ENCODE measurements at regions of chr12 and their contacts with region 1.

Region 1: GRCh38 chr12:73665193-73665592 is 872.4 kb upstream of the ATXN7L3B start:
- DNase-seq: no peak
- ATAC-seq: no peak
- H3K4me3 ChIP-seq: no peak overlapping the region
- H3K27ac ChIP-seq: no peak overlapping the region
- H3K4me1 ChIP-seq: no peaks in the 10 kb centered on the region
- H3K27me3 ChIP-seq: no peaks in the 10 kb centered on the region
- CTCF ChIP-seq: no peak
- EP300 ChIP-seq: no peak
- POLR2A ChIP-seq: no peak
- RAD21 ChIP-seq: no peak

Region 2: DNA sequence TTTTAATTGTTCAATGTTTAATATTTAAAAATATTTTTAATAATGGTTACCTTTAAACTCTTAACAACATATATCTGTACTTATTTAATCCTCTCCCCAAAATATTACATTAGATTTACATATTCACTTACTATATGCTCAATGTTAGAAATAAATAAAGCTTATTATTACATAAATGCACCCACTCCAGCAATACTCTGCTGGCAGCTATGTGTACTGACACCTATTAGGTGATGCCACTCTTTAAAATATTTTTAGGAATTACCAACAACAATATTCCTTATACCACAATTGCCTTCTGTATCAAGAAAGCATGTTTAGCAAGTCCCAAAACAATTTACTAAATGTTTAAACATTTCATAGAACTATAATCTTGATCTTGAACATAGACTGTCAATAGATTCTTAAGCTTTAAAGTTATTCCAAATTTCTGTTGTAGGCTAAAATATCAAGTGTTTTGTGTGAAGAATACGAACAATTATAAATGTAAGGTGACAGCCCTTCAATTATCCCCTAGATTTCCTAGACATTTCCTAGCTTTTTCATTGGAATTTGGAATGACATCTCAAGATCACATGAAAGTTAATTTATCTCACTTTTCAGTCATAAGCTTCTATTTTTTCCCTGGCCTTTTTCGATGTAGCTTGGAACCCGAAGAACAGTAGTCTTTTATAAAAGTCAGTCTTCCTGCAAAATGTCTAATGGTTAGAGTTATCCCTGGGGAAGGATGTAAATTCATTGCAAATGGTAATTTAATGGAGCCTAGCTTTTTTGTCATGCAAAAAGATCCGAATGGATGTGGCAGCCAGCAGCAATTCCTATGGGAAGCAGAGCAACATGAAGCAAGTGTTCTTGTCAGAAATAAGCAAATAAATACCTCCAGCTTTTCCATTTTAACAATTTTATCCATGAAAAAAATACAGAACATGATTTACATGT is 35.0 kb before region 1 on chr12:
- CTCF ChIA-PET with region 1: no interaction called
- POLR2A ChIA-PET with region 1: no interaction called
- in situ Hi-C with region 1: no loop called
- intact Hi-C with region 1: no loop called
- DNase-seq: no peak
- ATAC-seq: no peak
- H3K4me3 ChIP-seq: no peak overlapping the region
- H3K27ac ChIP-seq: no peak overlapping the region
- H3K4me1 ChIP-seq: no peaks in the 10 kb centered on the region
- H3K27me3 ChIP-seq: no peaks in the 10 kb centered on the region
- CTCF ChIP-seq: no peak
- EP300 ChIP-seq: no peak
- POLR2A ChIP-seq: no peak
- RAD21 ChIP-seq: no peak

Region 3: GRCh38 chr12:75103822-75104221 is 1438.6 kb after region 1 on chr12:
- CTCF ChIA-PET with region 1: no interaction called
- POLR2A ChIA-PET with region 1: no interaction called
- in situ Hi-C with region 1: loop called (anchors 10 kb)
- intact Hi-C with region 1: no loop called
- DNase-seq: no peak
- ATAC-seq: no peak
- H3K4me3 ChIP-seq: no peak overlapping the region
- H3K27ac ChIP-seq: no peak overlapping the region
- H3K4me1 ChIP-seq: no peaks in the 10 kb centered on the region
- H3K27me3 ChIP-seq: no peaks in the 10 kb centered on the region
- CTCF ChIP-seq: no peak
- EP300 ChIP-seq: no peak
- POLR2A ChIP-seq: no peak
- RAD21 ChIP-seq: no peak

Measured in K562 (cell line).